ENCODE measurements at regions of chr7 and their contacts with region 1.

Region 1: DNA sequence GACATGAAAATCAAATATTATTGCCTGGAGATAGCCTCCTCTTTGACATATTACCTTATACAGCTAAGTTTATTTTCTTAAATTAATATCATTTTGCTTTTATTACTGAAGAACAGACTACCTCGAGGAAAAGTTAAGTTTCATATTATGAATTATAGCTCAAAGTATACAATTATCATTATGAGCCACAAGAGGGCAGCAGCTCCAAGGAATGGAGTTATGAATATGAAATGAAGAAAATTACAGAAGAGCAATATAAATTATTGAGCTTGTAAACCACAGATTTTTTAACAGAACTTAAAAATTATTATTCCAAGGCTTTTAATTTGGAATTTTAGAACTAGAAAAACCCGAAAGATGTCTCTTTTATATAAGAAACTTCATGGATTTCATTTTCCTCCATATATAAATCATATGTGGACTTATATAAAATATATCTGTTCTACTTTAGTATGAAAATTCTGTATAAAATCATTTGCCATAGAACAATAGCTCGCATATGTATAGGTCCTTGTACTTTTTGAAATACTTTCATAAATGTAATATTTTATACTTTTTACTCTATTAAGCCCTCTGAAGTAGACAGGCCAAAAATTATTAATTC is 40.1 kb downstream of the IQUB start:
- DNase-seq: no peak
- H3K4me3 ChIP-seq: no peak overlapping the region
- H3K27ac ChIP-seq: no peak overlapping the region
- H3K27me3 ChIP-seq: no peaks in the 10 kb centered on the region
- CTCF ChIP-seq: peak; percentile 74

Region 2: GRCh38 chr7:123472750-123473445 is 21.4 kb before region 1 on chr7:
- CTCF ChIA-PET with region 1: interaction called, 13 read pairs
- POLR2A ChIA-PET with region 1: no interaction called
- DNase-seq: no peak
- H3K4me3 ChIP-seq: no peak overlapping the region
- H3K27ac ChIP-seq: no peak overlapping the region
- H3K27me3 ChIP-seq: no peaks in the 10 kb centered on the region
- CTCF ChIP-seq: no peak

Region 3: GRCh38 chr7:123522066-123522465 is 27.8 kb after region 1 on chr7:
- CTCF ChIA-PET with region 1: interaction called, 12 read pairs
- POLR2A ChIA-PET with region 1: no interaction called
- DNase-seq: no peak
- H3K4me3 ChIP-seq: no peak overlapping the region
- H3K27ac ChIP-seq: no peak overlapping the region
- H3K27me3 ChIP-seq: no peaks in the 10 kb centered on the region
- CTCF ChIP-seq: no peak

Region 4: DNA sequence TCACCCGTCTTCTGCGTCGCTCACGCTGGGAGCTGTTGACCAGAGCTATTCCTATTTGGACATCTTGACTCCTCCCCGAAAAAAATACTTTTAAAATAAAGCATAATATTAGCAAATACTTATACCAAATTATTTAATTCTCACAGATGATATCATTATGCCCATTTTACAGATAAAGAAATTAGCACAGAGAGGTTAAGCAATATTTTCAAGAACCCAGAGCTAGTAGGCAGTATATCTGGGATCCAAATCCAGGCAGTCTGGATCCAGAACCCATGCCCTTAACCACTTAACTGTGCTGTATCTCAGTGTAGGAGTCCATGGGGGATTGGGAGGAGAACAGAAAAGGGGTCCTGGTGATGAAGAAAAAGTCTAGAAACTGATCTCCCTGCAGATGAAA is 34.0 kb after region 1 on chr7:
- CTCF ChIA-PET with region 1: interaction called, 49 read pairs
- POLR2A ChIA-PET with region 1: no interaction called
- DNase-seq: no peak
- H3K4me3 ChIP-seq: no peak overlapping the region
- H3K27ac ChIP-seq: no peak overlapping the region
- H3K27me3 ChIP-seq: no peaks in the 10 kb centered on the region
- CTCF ChIP-seq: no peak

Region 5: DNA sequence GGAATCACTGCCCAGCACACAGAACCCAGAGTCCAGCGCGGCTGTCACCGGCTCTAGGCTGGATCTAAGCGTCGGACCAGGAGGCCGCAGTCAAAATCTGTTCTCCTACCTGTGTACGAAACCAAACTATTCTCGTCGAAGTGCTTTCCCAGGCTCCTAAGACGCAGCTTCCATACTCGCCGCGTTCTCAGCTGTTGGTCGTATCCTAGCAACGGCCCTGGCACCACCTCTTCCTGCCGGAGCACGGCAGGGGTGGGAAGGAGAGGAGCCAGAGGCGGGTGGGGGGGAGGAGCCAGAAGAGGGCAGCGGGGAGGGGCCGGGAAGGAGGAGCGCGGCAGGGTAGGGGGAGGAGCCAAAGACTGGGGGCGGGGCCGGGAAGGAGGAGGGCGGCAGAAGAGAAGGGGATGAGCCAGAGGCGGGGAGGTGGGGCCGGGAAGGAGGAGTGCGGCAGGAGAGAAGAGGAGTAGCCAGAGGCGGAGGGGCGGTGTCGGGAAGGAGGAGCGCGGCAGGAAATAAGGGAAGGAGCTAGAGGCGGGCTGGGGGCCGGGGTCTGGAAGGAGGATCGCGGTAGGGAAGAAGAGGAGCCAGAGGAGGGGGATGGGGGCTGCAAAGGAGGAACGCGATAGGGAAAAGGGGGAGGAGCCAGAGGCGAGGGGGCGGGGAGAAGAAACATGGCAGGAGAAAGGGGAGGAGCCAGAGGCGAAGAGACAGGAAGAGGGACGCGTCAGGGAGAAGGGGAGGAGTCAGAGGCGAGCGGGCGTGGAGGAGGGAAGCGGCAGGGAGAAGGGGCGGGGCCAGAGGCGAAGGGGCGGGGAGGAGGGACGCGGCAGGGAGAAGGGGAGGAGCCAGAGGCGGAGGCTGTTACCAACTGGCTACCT is 40.3 kb after region 1 on chr7 and contains the start of gene IQUB:
- CTCF ChIA-PET with region 1: interaction called, 49 read pairs
- POLR2A ChIA-PET with region 1: no interaction called
- DNase-seq: peak; percentile 94
- H3K4me3 ChIP-seq: peak within 1 kb of the TSS; percentile 79
- H3K27ac ChIP-seq: peak within 1 kb of the TSS; percentile 65
- H3K27me3 ChIP-seq: no peaks in the 10 kb centered on the region
- CTCF ChIP-seq: no peak
- polyA plus RNA-seq, gene IQUB: 0.06 and 0.15 TPM in 2 replicates

Region 6: DNA sequence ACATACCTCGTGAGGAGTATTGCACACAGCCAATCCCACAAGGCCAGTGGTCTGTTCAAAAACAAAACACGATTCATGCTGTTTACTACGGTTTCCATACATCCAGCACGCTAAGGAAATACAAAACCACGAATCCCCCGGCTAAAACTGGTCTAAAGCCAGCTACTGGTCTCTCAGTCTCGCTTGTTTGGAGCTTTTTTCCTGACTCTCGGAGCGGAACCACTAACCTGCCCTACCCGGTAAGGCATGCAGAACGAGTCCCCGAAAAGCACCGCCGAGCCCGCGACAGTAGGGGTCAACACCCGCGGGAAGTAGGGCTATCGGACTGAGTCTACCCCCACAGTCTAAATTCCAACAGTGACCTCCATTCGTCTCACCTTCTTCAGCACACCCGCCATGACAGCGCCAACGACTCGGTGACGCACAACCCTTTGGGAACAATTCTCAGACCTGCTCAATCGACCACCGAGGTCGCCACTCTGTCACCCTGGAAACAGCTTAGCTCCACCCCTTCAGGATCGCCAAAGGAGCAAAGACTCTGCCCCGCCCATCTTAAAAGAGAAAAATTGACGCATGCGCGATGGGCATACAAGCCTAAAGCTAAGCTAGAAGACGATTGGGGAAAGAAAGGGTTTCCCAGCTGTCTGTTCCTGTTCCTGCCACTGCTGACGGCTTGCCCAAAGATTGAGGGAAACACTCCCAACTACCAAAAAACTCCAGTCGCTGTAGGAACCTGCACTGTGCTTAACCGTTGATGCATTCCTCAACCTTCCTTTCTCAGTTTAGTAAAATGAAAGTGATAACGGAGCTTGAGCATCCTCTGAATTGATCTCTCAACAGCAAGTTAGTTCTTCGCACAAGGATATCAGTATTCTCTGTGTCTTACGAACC is 63.3 kb after region 1 on chr7 and contains the start of gene NDUFA5:
- CTCF ChIA-PET with region 1: interaction called, 25 read pairs
- POLR2A ChIA-PET with region 1: interaction called, 5 read pairs
- DNase-seq: peak; percentile 98
- H3K4me3 ChIP-seq: peak within 1 kb of the TSS; percentile 94
- H3K27ac ChIP-seq: peak within 1 kb of the TSS; percentile 55
- H3K27me3 ChIP-seq: peaks cover 2% of the 10 kb centered on the region
- CTCF ChIP-seq: no peak
- polyA plus RNA-seq, gene NDUFA5: 21.0 and 39.8 TPM in 2 replicates

Region 7: DNA sequence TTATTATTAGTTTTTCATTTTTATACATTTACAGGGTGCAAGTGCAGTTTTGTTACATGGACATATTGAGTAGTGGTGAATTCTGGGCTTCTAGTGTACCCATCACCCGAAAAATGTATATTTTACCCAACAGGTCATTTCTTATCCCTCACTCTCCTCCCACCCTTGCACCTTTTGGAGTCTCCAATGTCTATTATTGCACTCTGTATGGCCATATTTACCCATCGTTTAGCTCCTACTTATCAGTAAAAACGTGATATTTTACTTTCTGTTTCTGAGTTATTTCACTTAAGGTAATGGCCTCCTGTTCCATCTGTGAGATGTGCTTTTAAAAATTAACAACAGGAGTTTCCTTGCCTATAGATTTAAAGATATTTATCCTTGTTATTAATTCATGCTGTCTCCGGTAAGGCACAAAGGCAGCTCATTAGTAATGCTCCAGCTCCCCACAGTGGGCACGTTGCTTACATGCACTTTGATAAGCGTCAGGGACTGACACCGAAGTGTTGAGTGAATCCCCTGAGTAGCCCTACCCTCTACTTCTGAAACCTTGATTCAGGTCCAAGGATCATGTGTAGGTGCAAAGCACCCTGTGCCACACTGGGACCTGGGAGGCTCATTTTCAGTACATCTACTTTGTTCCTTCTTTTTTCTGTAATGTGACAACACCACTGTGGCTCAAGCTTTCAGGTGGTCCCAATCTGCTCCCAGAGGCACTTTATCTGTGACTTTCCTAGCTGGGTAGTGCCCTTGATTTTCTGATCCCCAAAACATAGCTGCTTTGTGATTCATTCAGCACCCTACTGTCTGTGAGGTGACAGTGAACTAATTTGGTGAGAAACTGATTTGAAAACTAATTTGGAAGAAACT is 377.9 kb after region 1 on chr7:
- CTCF ChIA-PET with region 1: interaction called, 39 read pairs
- POLR2A ChIA-PET with region 1: no interaction called
- DNase-seq: peak; percentile 1
- H3K4me3 ChIP-seq: no peak overlapping the region
- H3K27ac ChIP-seq: no peak overlapping the region
- H3K27me3 ChIP-seq: no peaks in the 10 kb centered on the region
- CTCF ChIP-seq: peak; percentile 46